Activated B cell treated with CpG ODN at 0.5 μM for 24 hours (primary cell): ENCODE measurements at regions of chr17 and their contacts with region 1.

Region 1: GRCh38 chr17:48074315-48075081 is 26.3 kb downstream of the NFE2L1 start:
- DNase-seq: peak; percentile 36
- ATAC-seq: peak; percentile 93
- H3K4me3 Mint-ChIP-seq: no peak overlapping the region
- H3K27ac Mint-ChIP-seq: no peak overlapping the region
- H3K4me1 Mint-ChIP-seq: no peaks in the 10 kb centered on the region
- H3K27me3 Mint-ChIP-seq: no peaks in the 10 kb centered on the region
- CTCF ChIP-seq: no peak

Region 2: DNA sequence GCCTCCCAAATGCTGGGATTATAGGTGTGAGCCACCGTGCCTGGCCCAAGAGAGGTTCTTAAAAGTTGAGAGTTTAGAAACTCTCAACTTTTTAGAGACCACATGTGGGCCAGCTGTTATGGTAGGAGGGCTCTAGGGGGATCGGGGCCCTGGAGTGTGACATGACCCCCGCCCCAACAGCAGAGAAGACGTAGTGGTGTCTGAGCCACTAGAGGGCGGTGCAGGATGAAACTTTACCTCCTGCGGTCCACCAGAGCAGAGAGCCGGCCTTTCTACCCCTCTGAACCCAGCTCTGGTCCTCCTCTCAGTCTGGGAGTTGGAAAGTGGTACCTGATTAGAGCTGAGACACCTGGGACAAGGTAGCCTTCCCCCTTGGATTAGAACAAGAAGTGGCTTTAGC is 96.2 kb before region 1 on chr17:
- CTCF ChIA-PET with region 1: interaction called, 5 read pairs
- POLR2A ChIA-PET with region 1: no interaction called
- intact Hi-C with region 1: loop called (anchors 1 kb)
- DNase-seq: peak; percentile 26
- ATAC-seq: peak; percentile 97
- H3K4me3 Mint-ChIP-seq: no peak overlapping the region
- H3K27ac Mint-ChIP-seq: no peak overlapping the region
- H3K4me1 Mint-ChIP-seq: peaks cover 2% of the 10 kb centered on the region
- H3K27me3 Mint-ChIP-seq: no peaks in the 10 kb centered on the region
- CTCF ChIP-seq: no peak

Region 3: GRCh38 chr17:48037036-48037837 is 37.3 kb before region 1 on chr17 and contains the start of gene COPZ2:
- CTCF ChIA-PET with region 1: interaction called, 9 read pairs
- POLR2A ChIA-PET with region 1: no interaction called
- intact Hi-C with region 1: loop called (anchors 1 kb)
- DNase-seq: peak; percentile 53
- ATAC-seq: peak; percentile 93
- H3K4me3 Mint-ChIP-seq: peak within 1 kb of the TSS; percentile 86
- H3K27ac Mint-ChIP-seq: no peak within 1 kb of the TSS
- H3K4me1 Mint-ChIP-seq: peaks cover 14% of the 10 kb centered on the region
- H3K27me3 Mint-ChIP-seq: peaks cover 17% of the 10 kb centered on the region
- CTCF ChIP-seq: no peak
- total RNA-seq, gene COPZ2: 3.3 and 4.1 TPM in 2 replicates

Region 4: DNA sequence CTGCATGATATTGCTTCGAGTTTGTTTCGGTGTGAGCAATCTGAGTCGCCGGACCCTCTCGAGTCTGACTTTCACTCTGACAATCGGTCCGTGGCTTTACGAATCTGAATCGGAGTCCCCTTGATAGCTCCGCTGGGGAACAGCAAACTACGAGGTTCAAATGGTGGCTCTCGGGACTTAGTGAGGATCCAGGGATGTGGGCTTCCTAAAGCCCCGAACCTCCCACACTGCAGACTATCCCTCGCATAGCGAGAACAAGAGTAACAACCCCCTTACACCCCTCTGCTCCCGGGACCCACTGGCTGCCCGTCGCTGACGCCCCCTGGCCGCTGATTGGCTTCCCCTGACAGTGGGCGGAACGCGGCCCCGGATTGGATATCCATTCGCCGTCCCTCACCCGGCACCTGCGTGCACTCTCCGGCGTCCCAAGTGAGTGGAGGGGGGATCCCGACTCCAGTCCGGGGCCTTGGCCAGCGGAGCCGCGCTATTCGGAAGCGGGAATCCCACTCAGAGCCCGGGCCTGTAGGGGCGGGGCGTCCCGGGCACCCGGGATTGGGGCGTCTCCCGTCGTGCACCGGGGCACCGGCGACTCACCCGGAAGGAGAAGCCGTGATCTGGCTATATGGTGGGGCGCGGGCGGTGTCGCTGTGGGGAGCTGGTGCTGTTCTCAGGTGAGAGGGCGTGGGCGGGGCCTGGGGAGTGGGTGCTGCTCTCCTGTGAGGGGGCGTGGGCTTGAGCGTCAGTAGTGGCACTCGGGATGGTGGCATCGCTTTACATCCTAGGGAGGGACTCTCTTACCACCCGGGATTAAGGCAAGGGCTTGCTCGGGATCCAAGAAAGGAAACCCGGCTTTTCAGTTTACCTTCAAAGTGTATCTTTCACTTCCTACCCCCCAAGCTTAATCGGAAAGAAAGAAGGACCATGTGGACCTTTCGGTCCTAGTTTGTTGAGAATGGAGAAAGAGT is 33.0 kb after region 1 on chr17 and contains the start of gene SNX11:
- CTCF ChIA-PET with region 1: interaction called, 29 read pairs
- POLR2A ChIA-PET with region 1: interaction called, 3 read pairs
- intact Hi-C with region 1: no loop called
- DNase-seq: peak; percentile 89
- ATAC-seq: peak; percentile 71
- H3K4me3 Mint-ChIP-seq: peak within 1 kb of the TSS; percentile 99
- H3K27ac Mint-ChIP-seq: peak within 1 kb of the TSS; percentile 97
- H3K4me1 Mint-ChIP-seq: peaks cover 69% of the 10 kb centered on the region
- H3K27me3 Mint-ChIP-seq: no peaks in the 10 kb centered on the region
- CTCF ChIP-seq: no peak
- total RNA-seq, gene SNX11: 129 and 145 TPM in 2 replicates

Region 5: DNA sequence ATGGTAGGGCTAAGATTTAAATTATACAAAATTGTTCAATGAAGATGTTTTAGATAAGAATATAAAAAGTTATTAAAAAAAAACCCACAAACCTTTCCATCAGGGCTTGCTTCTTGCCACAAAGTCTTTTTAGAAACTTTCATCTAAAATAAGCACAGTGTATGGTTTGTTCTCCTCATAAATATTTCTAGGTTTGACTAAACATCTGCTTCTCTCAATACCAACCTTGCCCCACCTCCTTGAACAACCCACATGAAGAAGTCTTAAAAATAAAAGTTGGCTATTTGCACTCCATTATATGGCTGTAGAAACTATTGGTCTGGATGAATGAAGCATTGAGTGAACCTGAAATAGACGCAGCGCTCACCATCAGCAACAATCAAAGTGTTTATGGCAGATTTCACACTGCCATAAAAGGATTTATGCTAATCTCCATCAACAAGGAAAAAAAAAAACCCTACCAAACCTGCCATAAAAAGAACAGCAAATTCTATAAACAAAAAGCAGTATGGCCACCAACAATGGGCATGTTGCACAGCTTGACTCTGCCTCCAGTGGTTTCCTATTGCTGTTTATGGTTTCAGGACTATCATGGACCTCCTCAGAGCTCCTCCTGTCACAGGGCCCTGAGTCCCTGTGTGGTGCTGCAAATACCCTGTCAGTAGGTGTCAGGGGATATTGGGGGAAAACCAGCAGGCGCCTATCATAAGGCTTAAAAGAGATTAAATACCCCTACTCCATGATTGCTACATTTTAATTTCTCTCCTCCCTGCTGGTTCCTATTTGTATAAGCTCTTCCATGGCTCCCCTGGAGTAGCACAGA is 70.7 kb after region 1 on chr17:
- CTCF ChIA-PET with region 1: no interaction called
- POLR2A ChIA-PET with region 1: no interaction called
- intact Hi-C with region 1: no loop called
- DNase-seq: no peak
- ATAC-seq: no peak
- H3K4me3 Mint-ChIP-seq: no peak overlapping the region
- H3K27ac Mint-ChIP-seq: no peak overlapping the region
- H3K4me1 Mint-ChIP-seq: peaks cover 10% of the 10 kb centered on the region
- H3K27me3 Mint-ChIP-seq: no peaks in the 10 kb centered on the region
- CTCF ChIP-seq: no peak